Activated CD4-positive, alpha-beta T cell treated with anti-CD3 and anti-CD28 coated beads, Interleukin-2, amount 10 ng/mL, durations not matched to agents 24 days and 14 days (primary cell): ENCODE measurements at regions of chr10 and their contacts with region 1.

Region 1: DNA sequence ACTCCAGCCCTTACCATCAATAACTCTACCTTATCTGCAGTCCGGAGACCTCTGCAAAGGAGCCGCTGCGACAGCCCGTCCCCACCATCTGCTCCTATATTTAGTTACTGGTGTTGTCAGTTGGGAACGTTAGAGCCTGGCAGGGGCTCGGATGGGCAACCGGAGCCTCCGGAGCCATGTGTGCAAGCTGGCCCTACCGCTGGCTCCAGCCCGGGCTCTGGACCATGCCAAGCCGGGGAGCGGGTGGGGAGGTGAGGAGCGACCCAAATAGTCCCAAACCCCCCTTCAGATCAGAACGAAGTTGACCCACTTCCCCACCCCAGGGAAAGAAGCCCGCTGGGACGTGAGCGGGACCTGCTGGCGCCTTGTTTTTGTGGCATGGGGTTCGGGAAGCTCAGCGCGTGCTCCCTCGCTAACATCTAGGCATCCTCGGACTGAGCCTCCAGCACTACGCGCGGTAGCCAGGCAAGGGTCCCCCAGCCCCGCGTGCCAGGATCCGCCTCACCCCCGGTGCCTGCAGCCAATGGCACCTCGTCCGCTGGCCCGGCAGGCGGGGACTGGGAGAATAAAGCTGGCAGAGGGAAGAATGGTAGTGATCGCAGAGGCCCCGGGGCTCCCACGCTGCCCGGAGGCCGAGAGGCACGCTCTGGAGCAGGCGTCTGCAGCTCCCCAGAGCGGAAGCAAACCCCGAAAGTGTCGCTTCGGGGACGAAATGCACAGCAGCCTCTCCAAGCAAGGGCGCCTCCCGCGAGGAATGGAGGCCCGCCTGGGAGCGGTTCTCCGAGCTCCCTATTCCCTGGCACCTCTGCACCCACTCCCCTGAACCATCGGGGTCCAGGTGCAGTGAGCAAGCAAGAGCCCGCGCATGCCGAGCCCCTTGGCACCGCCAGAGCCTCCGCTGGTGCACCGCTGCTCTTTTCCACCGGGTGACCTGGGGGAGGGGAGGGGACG is 679 bp downstream of the LRRC20 start:
- DNase-seq: peak; percentile 85
- H3K4me3 Mint-ChIP-seq: peak overlapping the region; percentile 91
- H3K27ac Mint-ChIP-seq: peak overlapping the region; percentile 79
- H3K4me1 Mint-ChIP-seq: peaks cover 11% of the 10 kb centered on the region
- H3K27me3 Mint-ChIP-seq: peaks cover 2% of the 10 kb centered on the region

Region 2: GRCh38 chr10:70331486-70332268 is 50.1 kb before region 1 on chr10:
- intact Hi-C with region 1: no loop called
- DNase-seq: no peak
- H3K4me3 Mint-ChIP-seq: no peak overlapping the region
- H3K27ac Mint-ChIP-seq: no peak overlapping the region
- H3K4me1 Mint-ChIP-seq: peaks cover 6% of the 10 kb centered on the region
- H3K27me3 Mint-ChIP-seq: no peaks in the 10 kb centered on the region

Region 3: DNA sequence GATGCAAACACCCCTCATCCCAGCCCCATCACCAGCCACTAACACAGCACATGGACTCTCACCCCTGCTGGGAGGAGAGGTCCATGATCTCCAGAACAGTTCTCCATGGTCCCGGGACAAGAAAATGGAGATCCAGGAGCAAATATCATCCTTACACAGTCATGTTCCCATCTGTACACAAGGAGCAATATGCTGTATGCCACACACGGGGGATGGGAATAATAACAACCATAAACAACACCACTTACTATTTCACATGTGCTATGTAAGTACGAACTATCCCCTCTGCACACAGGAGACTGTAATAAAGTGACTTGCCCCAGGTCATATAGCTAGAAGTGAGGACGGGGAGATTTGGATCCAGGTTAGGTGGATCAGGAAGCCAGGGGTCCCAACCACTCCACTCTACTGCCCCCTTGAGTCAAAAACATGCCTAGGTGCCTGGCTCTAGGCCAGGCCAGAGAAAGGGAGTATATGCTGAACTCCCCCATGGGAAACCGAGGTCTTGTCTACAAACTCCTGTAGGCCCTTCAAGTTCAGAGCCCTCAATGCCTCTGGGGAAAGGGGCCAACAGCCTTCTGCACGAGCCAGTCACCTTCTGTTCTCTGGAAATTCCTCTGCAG is 33.4 kb before region 1 on chr10:
- intact Hi-C with region 1: no loop called
- DNase-seq: peak; percentile 75
- H3K4me3 Mint-ChIP-seq: no peak overlapping the region
- H3K27ac Mint-ChIP-seq: no peak overlapping the region
- H3K4me1 Mint-ChIP-seq: peaks cover 3% of the 10 kb centered on the region
- H3K27me3 Mint-ChIP-seq: no peaks in the 10 kb centered on the region

Region 4: DNA sequence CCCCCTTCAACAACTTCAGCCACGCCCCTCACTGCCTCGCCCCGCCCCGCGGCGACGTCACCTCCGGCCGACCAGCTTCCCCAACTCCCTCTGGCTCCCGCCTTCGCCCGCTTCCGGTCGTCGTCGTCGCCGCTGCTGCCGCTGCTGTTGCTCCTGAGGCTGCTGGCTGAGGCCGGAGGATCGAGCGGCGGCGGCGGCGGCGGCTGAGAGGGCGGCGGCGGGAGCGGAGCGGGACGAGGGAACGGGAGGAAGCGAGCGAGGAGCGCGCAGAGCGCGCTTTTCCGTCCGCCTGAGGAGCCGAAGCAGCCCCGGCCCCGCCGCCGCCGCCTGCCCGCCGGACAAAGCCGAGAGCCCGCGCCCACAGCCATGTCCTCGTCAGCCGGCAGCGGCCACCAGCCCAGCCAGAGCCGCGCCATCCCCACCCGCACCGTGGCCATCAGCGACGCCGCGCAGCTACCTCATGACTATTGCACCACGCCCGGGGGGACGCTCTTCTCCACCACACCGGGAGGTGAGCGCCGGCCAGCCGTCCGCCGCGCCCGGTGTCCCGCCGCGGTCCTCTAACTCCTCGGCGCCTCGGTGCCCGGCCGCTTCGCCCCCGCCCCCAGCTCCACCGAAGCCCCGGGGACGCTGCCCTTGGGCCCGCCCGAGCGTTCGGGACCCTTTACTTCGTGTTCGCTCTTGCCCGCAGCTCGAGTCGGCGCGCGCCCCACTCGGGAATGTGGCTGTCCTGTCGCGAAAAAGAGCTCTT is 22.5 kb after region 1 on chr10 and contains the start of gene EIF4EBP2:
- intact Hi-C with region 1: loop called (anchors 1 kb)
- DNase-seq: peak; percentile 100
- H3K4me3 Mint-ChIP-seq: peak within 1 kb of the TSS; percentile 98
- H3K27ac Mint-ChIP-seq: peak within 1 kb of the TSS; percentile 96
- H3K4me1 Mint-ChIP-seq: peaks cover 36% of the 10 kb centered on the region
- H3K27me3 Mint-ChIP-seq: peaks cover 2% of the 10 kb centered on the region
- total RNA-seq, gene EIF4EBP2: 37.6 and 38.3 TPM in 2 replicates

Region 5: GRCh38 chr10:70461215-70461986 is 79.7 kb after region 1 on chr10:
- intact Hi-C with region 1: no loop called
- DNase-seq: peak; percentile 82
- H3K4me3 Mint-ChIP-seq: no peak overlapping the region
- H3K27ac Mint-ChIP-seq: no peak overlapping the region
- H3K4me1 Mint-ChIP-seq: no peaks in the 10 kb centered on the region
- H3K27me3 Mint-ChIP-seq: peaks cover 48% of the 10 kb centered on the region